ENCODE measurements at regions of chr1 and their contacts with region 1.

Region 1: DNA sequence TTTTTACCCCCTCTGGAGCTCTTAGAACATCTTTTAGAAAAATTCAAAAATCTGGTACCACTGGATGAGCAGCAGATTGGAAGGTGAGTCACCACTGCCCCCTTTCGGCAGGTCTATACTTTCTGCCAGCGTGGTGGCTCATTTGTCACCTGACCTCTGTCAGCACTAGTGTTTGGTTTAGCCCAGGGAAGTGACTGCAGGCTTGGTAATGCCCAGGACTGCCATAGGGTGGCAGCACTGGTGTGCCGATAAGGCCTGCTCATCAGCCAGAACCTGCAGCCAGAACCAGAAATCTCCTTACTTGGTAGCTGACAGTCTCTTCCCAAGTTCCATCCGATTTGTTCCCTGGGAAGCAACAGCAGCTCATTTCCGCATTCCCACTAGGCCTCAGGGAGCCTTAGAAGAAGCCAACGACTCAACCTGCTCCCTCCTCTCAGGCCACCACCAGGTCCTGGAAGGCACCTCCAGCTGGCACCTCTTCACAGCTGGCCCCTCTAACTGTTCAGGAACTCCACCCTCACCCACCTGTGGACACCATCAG is 6.8 kb downstream of the SMIM12 start:
- DNase-seq: peak; percentile 85 to 99 (median 90)

Region 2: DNA sequence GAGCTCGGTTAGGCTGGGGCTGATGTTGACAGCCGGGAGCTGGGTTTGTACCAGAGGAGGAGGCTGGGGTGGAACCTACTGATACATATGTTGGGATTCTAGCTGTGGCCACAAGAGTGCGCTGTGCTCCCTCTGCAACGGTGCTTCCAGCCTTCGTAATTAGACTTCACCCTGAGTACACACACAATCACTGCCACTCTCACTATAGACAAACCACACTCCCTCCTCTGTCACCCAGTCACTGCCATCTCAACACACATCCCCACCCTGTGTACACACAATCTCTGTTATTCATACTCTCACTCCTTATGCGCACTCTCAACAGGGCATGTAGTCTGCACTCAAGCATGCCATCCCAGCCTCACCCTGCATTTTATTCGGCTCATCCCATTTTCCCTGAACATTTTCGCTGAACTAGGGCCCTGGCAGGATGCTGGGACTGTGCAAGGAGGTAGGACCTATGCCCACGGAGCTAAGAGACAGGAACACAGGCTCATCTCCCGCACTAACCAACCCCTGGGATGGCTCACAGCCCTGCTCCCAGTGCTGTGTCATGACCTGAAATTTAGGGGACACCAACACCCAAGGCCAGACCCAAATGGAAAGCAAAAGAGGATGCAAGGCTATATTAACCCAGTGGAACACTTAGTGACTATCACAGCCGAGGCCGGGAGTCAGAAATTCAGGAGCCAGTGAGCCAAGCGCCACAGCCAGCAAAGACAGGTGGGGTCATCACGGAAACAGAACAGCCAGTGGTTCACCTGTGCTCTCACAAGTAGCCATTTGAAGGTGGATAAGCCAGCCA is 66.0 kb before region 1 on chr1:
- intact Hi-C with region 1: loop called (anchors 1 kb)
- DNase-seq: peak; percentile 63 to 97 (median 80)

Region 3: GRCh38 chr1:34885405-34886247 is 32.9 kb after region 1 on chr1:
- intact Hi-C with region 1: no loop called
- DNase-seq: peak in 3 of 10 donors; percentile 36 to 88 (median 85)

Region 4: GRCh38 chr1:34984793-34985608 is 132.3 kb after region 1 on chr1 and contains the start of gene TMEM35B:
- intact Hi-C with region 1: loop called (anchors 10 kb)
- DNase-seq: peak; percentile 44 to 94 (median 66)

Region 5: GRCh38 chr1:35030756-35031446 is 178.2 kb after region 1 on chr1:
- intact Hi-C with region 1: loop called (anchors 10 kb)
- DNase-seq: peak in 2 of 10 donors; percentile 2 to 9

Region 6: GRCh38 chr1:35079003-35079930 is 226.5 kb after region 1 on chr1 and contains the start of gene ZMYM1:
- intact Hi-C with region 1: no loop called
- DNase-seq: peak; percentile 76 to 97 (median 86)

Region 7: GRCh38 chr1:35192853-35193664 is 340.3 kb after region 1 on chr1 and contains the start of gene SFPQ:
- intact Hi-C with region 1: loop called (anchors 5 kb)
- DNase-seq: peak; percentile 95 to 99 (median 96)